ENCODE measurements at regions of chr17 and their contacts with region 1.

Region 1: GRCh38 chr17:49763735-49764558 is at the start of gene FAM117A:
- DNase-seq: peak; percentile 100
- H3K4me3 ChIP-seq: peak within 1 kb of the TSS; percentile 77 to 99 (median 94)
- H3K27ac ChIP-seq: peak within 1 kb of the TSS; percentile 71 to 84
- H3K4me1 ChIP-seq: peaks cover 30 to 47% (median 39%) of the 10 kb centered on the region in 4 experiments
- H3K27me3 ChIP-seq: no peaks in the 10 kb centered on the region

Region 2: GRCh38 chr17:49739641-49740271 is 24.2 kb before region 1 on chr17:
- CTCF ChIA-PET with region 1: interaction called, 70 read pairs
- POLR2A ChIA-PET with region 1: interaction called, 201 read pairs
- DNase-seq: peak; percentile 99 to 100 (median 100)
- H3K4me3 ChIP-seq: peak overlapping the region in 6 of 7 experiments; percentile 20 to 64 (median 54)
- H3K27ac ChIP-seq: peak overlapping the region; percentile 91 to 95
- H3K4me1 ChIP-seq: peaks cover 60 to 86% (median 77%) of the 10 kb centered on the region in 4 experiments
- H3K27me3 ChIP-seq: no peaks in the 10 kb centered on the region

Region 3: GRCh38 chr17:49748791-49749190 is 15.2 kb before region 1 on chr17:
- CTCF ChIA-PET with region 1: interaction called, 73 read pairs
- POLR2A ChIA-PET with region 1: interaction called, 201 read pairs
- DNase-seq: peak in 2 of 3 donors; percentile 79 to 90
- H3K4me3 ChIP-seq: peak overlapping the region in 1 of 7 experiments; percentile 6
- H3K27ac ChIP-seq: peak overlapping the region; percentile 35 to 78
- H3K4me1 ChIP-seq: peaks cover 46 to 93% (median 68%) of the 10 kb centered on the region in 4 experiments
- H3K27me3 ChIP-seq: no peaks in the 10 kb centered on the region

Region 4: GRCh38 chr17:49779739-49780231 is 15.8 kb after region 1 on chr17:
- CTCF ChIA-PET with region 1: interaction called, 24 read pairs
- POLR2A ChIA-PET with region 1: interaction called, 12 read pairs
- DNase-seq: peak; percentile 47 to 61 (median 58)
- H3K4me3 ChIP-seq: no peak overlapping the region
- H3K27ac ChIP-seq: no peak overlapping the region
- H3K4me1 ChIP-seq: peaks cover 0 to 47% (median 17%) of the 10 kb centered on the region in 4 experiments
- H3K27me3 ChIP-seq: no peaks in the 10 kb centered on the region

Region 5: GRCh38 chr17:49788478-49789242 is 24.7 kb after region 1 on chr17 and contains the start of gene KAT7:
- CTCF ChIA-PET with region 1: interaction called, 3 read pairs
- POLR2A ChIA-PET with region 1: interaction called, 40 read pairs
- DNase-seq: peak; percentile 100
- H3K4me3 ChIP-seq: peak within 1 kb of the TSS; percentile 79 to 99 (median 96)
- H3K27ac ChIP-seq: peak within 1 kb of the TSS; percentile 97 to 98
- H3K4me1 ChIP-seq: peaks cover 9 to 34% (median 23%) of the 10 kb centered on the region in 4 experiments
- H3K27me3 ChIP-seq: no peaks in the 10 kb centered on the region

Measured in common myeloid progenitor, CD34-positive (primary cell).